Naive thymus-derived CD4-positive, alpha-beta T cell (primary cell): ENCODE measurements at regions of chr4 and their contacts with region 1.

Region 1: GRCh38 chr4:185256446-185256845 is 47.0 kb downstream of the SNX25 start:
- DNase-seq: no peak
- ATAC-seq: no peak
- H3K4me3 ChIP-seq: peak overlapping the region; percentile 39
- H3K4me3 Mint-ChIP-seq: peak overlapping the region in 6 of 10 donors; percentile 36 to 83 (median 78)
- H3K27ac ChIP-seq: peak overlapping the region; percentile 2
- H3K27ac Mint-ChIP-seq: peak overlapping the region in 5 of 9 donors; percentile 83 to 92 (median 87)
- H3K4me1 ChIP-seq: peaks cover 22 to 23% of the 10 kb centered on the region in 2 donors
- H3K4me1 Mint-ChIP-seq: peaks cover 10 to 70% (median 43%) of the 10 kb centered on the region in 7 donors
- H3K27me3 ChIP-seq: no peaks in the 10 kb centered on the region
- H3K27me3 Mint-ChIP-seq: no peaks in the 10 kb centered on the region

Region 2: GRCh38 chr4:185142912-185143595 is 113.4 kb before region 1 on chr4 and contains the start of gene SLC25A4:
- CTCF ChIA-PET with region 1: no interaction called
- POLR2A ChIA-PET with region 1: no interaction called
- intact Hi-C with region 1: loop called in 1 of 2 experiments (anchors 5 kb)
- DNase-seq: peak; percentile 68 to 81 (median 75)
- ATAC-seq: peak; percentile 95
- H3K4me3 ChIP-seq: peak within 1 kb of the TSS; percentile 57
- H3K4me3 Mint-ChIP-seq: peak within 1 kb of the TSS; percentile 84 to 95 (median 90)
- H3K27ac ChIP-seq: peak within 1 kb of the TSS; percentile 52
- H3K27ac Mint-ChIP-seq: peak within 1 kb of the TSS in 7 of 9 donors; percentile 4 to 89 (median 83)
- H3K4me1 ChIP-seq: peaks cover 4 to 13% of the 10 kb centered on the region in 2 donors
- H3K4me1 Mint-ChIP-seq: peaks cover 11 to 15% (median 12%) of the 10 kb centered on the region in 7 donors
- H3K27me3 ChIP-seq: peaks cover 0 to 3% of the 10 kb centered on the region in 2 donors
- H3K27me3 Mint-ChIP-seq: peaks cover 15 to 69% (median 26%) of the 10 kb centered on the region in 5 donors
- total RNA-seq, gene SLC25A4: 0.60 to 7.2 (median 4.9) TPM

Region 3: GRCh38 chr4:185209031-185209851 is 47.2 kb before region 1 on chr4 and contains the start of gene SNX25:
- CTCF ChIA-PET with region 1: interaction called, 3 read pairs
- POLR2A ChIA-PET with region 1: interaction called, 9 read pairs
- intact Hi-C with region 1: loop called (anchors 1 kb)
- DNase-seq: peak; percentile 77 to 93 (median 83)
- ATAC-seq: peak; percentile 96
- H3K4me3 ChIP-seq: peak within 1 kb of the TSS; percentile 81
- H3K4me3 Mint-ChIP-seq: peak within 1 kb of the TSS; percentile 87 to 95 (median 93)
- H3K27ac ChIP-seq: peak within 1 kb of the TSS; percentile 39
- H3K27ac Mint-ChIP-seq: peak within 1 kb of the TSS; percentile 82 to 93 (median 91)
- H3K4me1 ChIP-seq: peaks cover 27 to 28% of the 10 kb centered on the region in 2 donors
- H3K4me1 Mint-ChIP-seq: peaks cover 31 to 56% (median 47%) of the 10 kb centered on the region in 7 donors
- H3K27me3 ChIP-seq: no peaks in the 10 kb centered on the region
- H3K27me3 Mint-ChIP-seq: peaks cover 0 to 15% (median 0%) of the 10 kb centered on the region in 5 donors
- total RNA-seq, gene SNX25: 8.0 to 18.9 (median 14.3) TPM

Region 4: DNA sequence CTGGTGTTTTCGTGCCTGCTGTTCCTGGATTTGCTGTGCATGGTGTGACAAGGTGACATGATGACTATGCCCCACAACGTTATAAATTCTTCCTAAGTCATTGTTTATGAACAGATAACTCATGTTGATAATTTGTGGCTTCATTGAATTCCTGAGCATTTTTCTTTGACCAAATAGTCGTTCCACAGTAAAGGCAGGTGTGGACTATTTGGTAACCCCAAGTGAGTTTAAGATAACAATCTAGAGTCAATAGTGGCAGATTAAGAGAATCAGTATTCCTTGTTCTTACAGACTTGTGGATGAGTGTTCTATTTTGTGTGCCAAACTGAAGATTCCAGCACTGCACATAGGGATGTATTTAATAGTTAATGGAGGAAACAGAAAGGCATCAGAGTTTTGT is 12.9 kb after region 1 on chr4:
- CTCF ChIA-PET with region 1: interaction called, 6 read pairs
- POLR2A ChIA-PET with region 1: interaction called, 4 read pairs
- intact Hi-C with region 1: loop called in 1 of 2 experiments (anchors 2 kb)
- DNase-seq: no peak
- ATAC-seq: no peak
- H3K4me3 ChIP-seq: no peak overlapping the region
- H3K4me3 Mint-ChIP-seq: no peak overlapping the region
- H3K27ac ChIP-seq: no peak overlapping the region
- H3K27ac Mint-ChIP-seq: no peak overlapping the region
- H3K4me1 ChIP-seq: peaks cover 0 to 5% of the 10 kb centered on the region in 2 donors
- H3K4me1 Mint-ChIP-seq: peaks cover 1 to 33% (median 16%) of the 10 kb centered on the region in 7 donors
- H3K27me3 ChIP-seq: no peaks in the 10 kb centered on the region
- H3K27me3 Mint-ChIP-seq: no peaks in the 10 kb centered on the region